ENCODE measurements at regions of chr7 and their contacts with region 1.

Region 1: GRCh38 chr7:26853788-26854393 is 10.5 kb downstream of the SKAP2 start:
- DNase-seq: no peak
- ATAC-seq: no peak

Region 2: GRCh38 chr7:26664735-26665408 is 189.0 kb before region 1 on chr7:
- intact Hi-C with region 1: no loop called
- DNase-seq: no peak
- ATAC-seq: no peak

Region 3: GRCh38 chr7:26675143-26675887 is 178.6 kb before region 1 on chr7:
- intact Hi-C with region 1: no loop called
- DNase-seq: no peak
- ATAC-seq: no peak

Region 4: GRCh38 chr7:26694141-26694540 is 159.8 kb before region 1 on chr7:
- intact Hi-C with region 1: loop called (anchors 10 kb)
- DNase-seq: no peak
- ATAC-seq: no peak